ENCODE measurements at regions of chr1 and their contacts with region 1.

Region 1: DNA sequence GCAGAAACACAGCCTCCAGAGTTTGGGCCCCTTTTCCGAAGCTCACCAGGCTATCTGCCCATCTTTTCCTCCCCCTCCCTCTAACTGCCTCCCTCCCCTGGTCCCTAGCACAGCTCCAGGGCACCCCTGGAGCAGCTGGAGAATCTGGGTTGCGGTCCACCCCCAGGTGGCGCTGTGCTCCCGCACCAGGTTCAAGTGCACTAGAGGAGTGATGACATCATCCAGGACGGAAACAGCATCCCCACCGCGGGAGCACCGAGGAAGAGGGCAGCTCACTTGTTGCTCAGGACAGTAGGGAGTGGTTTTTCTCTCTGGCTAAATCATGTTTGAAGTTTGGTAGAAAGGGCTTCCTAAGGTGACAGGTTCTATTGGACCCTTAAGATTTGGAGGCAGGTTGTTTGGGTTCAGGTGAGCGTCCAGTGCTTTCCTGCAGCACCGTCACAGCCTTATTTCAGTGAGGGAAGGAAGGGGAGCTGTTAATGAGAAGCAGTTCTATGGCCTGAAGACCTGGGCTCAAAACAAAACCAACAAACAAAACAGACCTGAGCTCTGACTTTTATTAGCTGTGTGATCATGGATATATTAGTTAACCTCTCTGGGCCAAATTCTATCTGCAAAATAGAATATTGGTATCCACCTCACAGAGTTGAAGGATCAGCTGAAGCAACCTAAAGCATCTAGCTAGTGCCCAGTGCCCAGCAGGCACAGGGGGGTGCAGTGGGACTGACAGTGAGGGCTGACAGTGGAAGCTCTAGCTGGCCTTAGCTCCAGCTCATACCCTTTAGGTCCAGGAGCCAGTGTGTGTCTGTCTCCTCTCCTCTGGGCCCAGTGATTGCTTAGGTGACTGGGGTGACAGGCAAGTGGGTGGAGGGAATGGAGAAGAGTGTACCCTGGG is 7.5 kb downstream of the SHISA4 start:
- DNase-seq: peak; percentile 79
- H3K4me3 Mint-ChIP-seq: peak overlapping the region; percentile 9
- H3K27ac Mint-ChIP-seq: peak overlapping the region; percentile 36
- H3K4me1 Mint-ChIP-seq: peaks cover 7% of the 10 kb centered on the region
- H3K27me3 Mint-ChIP-seq: peaks cover 12% of the 10 kb centered on the region

Region 2: DNA sequence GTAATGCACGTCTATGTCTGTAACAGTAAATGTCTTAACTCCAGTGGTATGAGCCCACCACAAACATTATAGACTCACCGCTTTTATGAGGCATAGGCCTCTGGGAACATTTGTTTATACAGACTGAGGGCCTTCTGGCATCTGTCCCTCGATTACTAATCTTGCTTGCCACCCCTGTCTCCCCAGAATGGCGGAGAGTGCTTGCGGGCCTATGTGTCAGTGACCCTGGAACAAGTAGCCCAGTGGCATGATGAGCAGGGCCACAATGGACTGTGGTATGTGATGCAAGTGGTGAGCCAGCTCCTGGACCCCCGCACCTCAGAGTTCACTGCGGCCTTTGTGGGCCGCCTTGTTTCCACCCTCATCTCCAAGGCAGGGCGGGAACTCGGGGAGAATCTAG is 25.8 kb before region 1 on chr1:
- intact Hi-C with region 1: no loop called
- DNase-seq: no peak
- H3K4me3 Mint-ChIP-seq: no peak overlapping the region
- H3K27ac Mint-ChIP-seq: no peak overlapping the region
- H3K4me1 Mint-ChIP-seq: no peaks in the 10 kb centered on the region
- H3K27me3 Mint-ChIP-seq: no peaks in the 10 kb centered on the region

Region 3: DNA sequence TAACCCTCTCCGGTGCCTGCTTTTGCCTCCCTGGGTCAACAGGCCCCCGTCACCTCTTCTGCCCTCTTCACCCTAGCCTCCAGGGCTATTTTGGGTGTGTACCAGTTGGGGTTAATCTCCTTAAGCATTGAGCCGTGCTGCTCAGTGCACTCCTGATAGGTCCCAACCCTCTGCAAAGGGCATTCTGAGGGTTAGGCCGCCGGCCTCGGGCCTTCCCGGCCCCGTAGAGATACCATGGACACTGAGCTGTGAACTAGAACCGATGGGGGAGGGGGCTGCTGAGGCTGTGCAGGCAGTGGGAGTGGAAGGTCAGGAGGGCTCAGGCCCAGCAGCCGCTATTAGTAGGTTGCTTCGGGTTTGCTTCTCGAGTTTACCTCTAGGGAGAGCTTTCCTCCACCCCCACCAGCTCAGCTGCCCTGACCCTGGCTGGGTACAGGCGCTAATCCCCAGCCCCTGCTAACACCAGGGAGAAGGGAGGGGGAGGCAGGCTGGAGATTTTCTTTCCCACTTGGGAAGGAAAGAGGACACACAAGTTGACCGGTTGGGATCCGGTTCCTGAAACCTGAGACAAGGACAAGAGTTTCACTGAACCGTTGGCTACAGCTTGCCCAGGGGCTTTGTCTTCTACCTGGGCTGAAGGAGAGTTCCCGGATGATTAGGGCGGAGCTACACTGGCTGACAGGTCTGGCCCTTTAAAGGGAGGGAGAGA is 45.4 kb after region 1 on chr1:
- intact Hi-C with region 1: loop called (anchors 5 kb)
- DNase-seq: no peak
- H3K4me3 Mint-ChIP-seq: no peak overlapping the region
- H3K27ac Mint-ChIP-seq: no peak overlapping the region
- H3K4me1 Mint-ChIP-seq: peaks cover 4% of the 10 kb centered on the region
- H3K27me3 Mint-ChIP-seq: peaks cover 32% of the 10 kb centered on the region

Region 4: DNA sequence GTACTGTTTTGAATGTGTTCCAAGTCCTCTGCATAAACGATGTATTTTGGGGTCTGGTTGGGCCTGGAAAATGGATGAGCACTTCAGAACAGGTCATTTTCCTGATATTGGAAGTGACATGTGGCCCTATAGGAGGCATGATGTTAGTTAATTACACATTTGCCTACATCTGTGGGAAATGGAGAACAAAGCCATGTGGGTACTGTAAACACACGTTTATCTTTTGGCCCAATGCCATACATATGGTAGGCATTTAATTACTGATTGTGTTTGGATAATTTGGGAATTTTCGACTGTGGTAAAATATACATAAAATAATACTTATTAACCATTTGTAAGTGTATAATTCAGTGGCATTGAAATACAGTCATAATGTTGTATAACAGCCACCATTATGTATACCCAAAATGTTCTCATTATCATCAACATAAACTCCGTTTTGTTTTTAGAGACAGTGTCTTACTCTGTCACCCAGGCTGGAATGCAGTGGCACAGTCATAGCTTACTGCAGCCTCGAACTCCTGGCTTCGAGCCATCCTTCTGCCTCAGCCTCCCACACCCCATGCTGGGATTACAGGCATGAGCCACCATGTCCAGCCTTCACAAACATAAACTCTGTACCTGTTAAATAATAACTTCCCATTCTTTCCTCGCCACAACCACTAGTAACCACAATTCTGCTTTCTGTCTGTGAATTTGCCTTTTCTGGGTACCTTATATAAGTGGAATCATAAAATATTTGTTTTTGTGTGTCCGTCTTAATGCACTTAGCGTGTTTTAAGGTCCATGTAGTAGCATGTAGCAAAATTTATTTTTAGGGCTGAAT is 74.4 kb after region 1 on chr1:
- intact Hi-C with region 1: loop called (anchors 1 kb)
- DNase-seq: no peak
- H3K4me3 Mint-ChIP-seq: no peak overlapping the region
- H3K27ac Mint-ChIP-seq: no peak overlapping the region
- H3K4me1 Mint-ChIP-seq: no peaks in the 10 kb centered on the region
- H3K27me3 Mint-ChIP-seq: peaks cover 5% of the 10 kb centered on the region